Panc1 (cell line): ENCODE measurements at regions of chr4 and their contacts with region 1.

Region 1: GRCh38 chr4:140764774-140765392 is 8.7 kb upstream of the TBC1D9 start:
- DNase-seq: no peak
- ATAC-seq: no peak
- H3K4me3 ChIP-seq: no peak overlapping the region
- H3K27ac ChIP-seq: no peak overlapping the region
- H3K4me1 ChIP-seq: no peaks in the 10 kb centered on the region
- H3K27me3 ChIP-seq: no peaks in the 10 kb centered on the region
- CTCF ChIP-seq: no peak

Region 2: DNA sequence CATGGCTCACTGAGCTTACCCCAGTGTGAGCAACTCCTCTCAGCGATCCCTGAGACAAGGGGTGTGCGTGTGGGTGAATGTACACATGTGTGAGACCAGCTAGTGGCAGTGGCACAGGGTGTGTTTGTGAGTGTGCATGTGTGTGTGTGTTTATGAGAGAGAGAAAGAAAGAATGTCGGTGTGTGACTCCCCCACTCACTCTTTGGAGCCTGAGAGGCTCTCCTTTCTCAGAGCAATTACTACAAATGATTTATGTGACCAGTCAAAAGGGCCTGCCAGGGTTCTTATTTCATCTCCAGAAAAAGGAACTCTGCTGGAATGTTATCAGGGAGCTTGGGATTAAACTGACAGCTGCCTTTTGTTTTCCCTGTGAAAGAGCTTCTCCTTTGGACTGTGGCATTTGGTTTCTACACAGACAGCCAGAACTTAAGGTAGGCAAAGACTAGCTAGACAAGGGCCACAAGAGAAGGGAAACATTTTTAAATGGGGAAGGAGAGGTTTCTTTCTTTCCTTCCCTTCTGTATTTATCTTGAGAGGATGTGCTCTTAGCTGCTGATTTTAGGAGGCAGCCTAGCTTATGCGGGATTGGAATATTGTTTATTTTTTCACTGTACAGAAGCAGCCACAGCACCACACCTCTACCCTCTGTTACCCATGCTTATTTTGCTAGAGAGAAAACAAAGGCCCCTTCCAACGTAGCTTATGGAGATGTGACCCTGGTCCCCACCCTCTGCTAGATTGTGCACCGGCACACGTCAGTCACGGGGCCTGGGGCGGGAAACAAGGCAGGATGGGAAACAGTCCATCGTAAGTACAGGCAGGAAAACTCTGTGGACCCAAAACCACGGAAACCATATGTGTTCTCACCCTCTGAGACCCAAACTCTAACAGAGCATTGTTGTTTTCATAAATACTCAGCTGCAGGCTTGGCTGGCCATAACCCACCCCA is 955.8 kb before region 1 on chr4:
- CTCF ChIA-PET with region 1: no interaction called
- POLR2A ChIA-PET with region 1: interaction called, 18 read pairs
- in situ Hi-C with region 1: no loop called
- intact Hi-C with region 1: no loop called
- DNase-seq: no peak
- ATAC-seq: no peak
- H3K4me3 ChIP-seq: no peak overlapping the region
- H3K27ac ChIP-seq: no peak overlapping the region
- H3K4me1 ChIP-seq: no peaks in the 10 kb centered on the region
- H3K27me3 ChIP-seq: no peaks in the 10 kb centered on the region
- CTCF ChIP-seq: no peak

Region 3: DNA sequence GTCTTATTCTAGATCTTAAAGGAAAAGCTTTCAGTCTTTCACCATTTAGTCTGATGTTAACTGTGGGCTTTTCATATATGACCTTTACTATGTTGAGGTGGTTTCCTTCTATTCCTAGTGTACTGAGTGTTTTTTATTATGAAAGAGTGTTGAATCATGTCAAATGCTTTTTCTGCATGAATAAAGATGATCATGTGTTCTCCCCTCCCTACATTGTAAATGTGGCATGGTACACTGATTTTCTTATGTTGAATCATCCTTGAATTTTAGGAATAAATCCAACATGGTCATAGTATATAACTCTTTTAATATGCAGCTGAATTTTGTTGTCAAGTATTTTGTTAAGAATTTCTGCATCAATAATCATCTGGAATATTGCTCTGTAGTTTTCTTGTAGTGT is 341.8 kb before region 1 on chr4:
- CTCF ChIA-PET with region 1: no interaction called
- POLR2A ChIA-PET with region 1: no interaction called
- in situ Hi-C with region 1: no loop called
- intact Hi-C with region 1: no loop called
- DNase-seq: no peak
- ATAC-seq: no peak
- H3K4me3 ChIP-seq: no peak overlapping the region
- H3K27ac ChIP-seq: no peak overlapping the region
- H3K4me1 ChIP-seq: peaks cover 6% of the 10 kb centered on the region
- H3K27me3 ChIP-seq: no peaks in the 10 kb centered on the region
- CTCF ChIP-seq: no peak